ENCODE measurements at regions of chr2 and their contacts with region 1.

Region 1: GRCh38 chr2:230712443-230713330 is at the start of gene CAB39:
- DNase-seq: peak; percentile 88 to 92
- ATAC-seq: peak; percentile 90 to 94 (median 91)
- H3K4me3 ChIP-seq: peak within 1 kb of the TSS; percentile 88
- H3K27ac ChIP-seq: peak within 1 kb of the TSS; percentile 97
- H3K4me1 ChIP-seq: peaks cover 38% of the 10 kb centered on the region
- H3K27me3 ChIP-seq: no peaks in the 10 kb centered on the region
- CTCF ChIP-seq: peak; percentile 89
- total RNA-seq, gene CAB39: 107 to 139 (median 128) TPM

Region 2: DNA sequence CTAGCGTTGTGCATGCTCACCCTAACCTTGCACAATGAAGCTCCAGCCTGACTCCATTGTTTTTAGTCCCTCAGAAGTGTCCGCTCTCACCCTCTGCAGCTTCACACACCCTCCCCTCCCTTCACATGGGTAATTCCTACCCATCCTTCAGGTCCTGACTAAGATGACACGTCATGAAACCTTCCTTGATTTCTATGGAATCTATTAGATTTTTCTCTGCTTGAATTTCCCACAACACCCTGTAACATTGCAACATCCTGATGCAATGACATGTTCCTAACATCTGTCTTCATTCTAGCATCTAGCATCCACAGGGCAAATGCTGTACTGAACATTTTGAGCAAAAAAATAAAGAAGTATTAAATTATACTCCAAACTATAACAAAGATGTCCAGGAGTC is 1364.6 kb before region 1 on chr2:
- intact Hi-C with region 1: loop called in 1 of 2 experiments (anchors 5 kb)
- DNase-seq: no peak
- ATAC-seq: no peak
- H3K4me3 ChIP-seq: no peak overlapping the region
- H3K27ac ChIP-seq: no peak overlapping the region
- H3K4me1 ChIP-seq: no peaks in the 10 kb centered on the region
- H3K27me3 ChIP-seq: no peaks in the 10 kb centered on the region
- CTCF ChIP-seq: no peak

Region 3: DNA sequence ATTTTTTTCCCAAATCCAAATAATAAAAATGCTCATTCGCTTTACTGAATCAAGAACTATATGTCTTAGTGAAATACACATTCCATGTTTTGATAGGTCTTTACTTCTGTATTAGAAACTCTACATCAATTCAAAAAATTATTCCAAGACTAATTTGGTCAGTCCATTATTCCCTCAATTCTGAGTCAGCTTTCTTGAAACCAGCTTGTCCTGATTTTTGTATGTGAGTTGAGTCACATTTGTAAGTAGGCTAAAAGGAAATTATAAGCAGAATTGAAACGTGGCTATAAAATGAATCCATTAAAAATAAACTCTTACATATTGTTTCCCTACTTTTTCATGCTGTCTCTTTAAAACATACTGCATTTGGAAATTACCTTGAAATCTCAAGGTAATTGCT is 1111.3 kb before region 1 on chr2:
- intact Hi-C with region 1: no loop called
- DNase-seq: no peak
- ATAC-seq: no peak
- H3K4me3 ChIP-seq: no peak overlapping the region
- H3K27ac ChIP-seq: no peak overlapping the region
- H3K4me1 ChIP-seq: no peaks in the 10 kb centered on the region
- H3K27me3 ChIP-seq: no peaks in the 10 kb centered on the region
- CTCF ChIP-seq: no peak

Region 4: DNA sequence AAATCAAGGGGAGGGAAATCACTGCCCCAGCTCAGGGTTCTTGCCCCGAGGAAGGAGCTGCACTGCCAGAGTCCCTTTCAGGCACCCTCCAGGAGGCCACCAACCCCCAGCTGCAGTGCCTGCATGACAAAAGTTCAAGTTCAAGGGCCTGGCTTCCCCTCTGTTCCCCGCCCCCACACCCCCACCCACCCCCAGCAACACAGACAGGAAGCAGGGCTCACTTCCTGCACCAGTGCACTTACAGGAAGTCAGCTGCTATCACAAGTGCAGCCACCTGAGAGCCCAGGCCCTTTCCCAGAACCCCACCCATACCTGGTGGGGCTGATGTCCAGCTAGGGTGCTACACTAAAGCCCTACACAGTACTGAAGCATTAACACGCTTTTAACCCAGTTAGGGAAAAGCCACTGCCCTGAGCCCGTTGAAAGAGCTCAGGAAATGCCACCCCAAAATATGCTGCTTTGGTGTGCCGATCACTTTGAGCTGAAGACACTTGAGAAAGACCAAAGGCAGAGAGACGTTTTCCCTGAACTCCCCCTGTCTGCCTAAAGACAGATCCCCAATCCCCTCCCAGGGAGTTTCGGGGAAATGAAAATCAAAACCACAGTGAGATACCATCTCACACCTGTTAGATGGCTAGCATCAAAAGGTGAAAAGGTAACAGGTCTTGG is 110.0 kb before region 1 on chr2:
- intact Hi-C with region 1: no loop called
- DNase-seq: no peak
- ATAC-seq: no peak
- H3K4me3 ChIP-seq: no peak overlapping the region
- H3K27ac ChIP-seq: no peak overlapping the region
- H3K4me1 ChIP-seq: no peaks in the 10 kb centered on the region
- H3K27me3 ChIP-seq: no peaks in the 10 kb centered on the region
- CTCF ChIP-seq: no peak

Region 5: GRCh38 chr2:230668184-230668938 is 44.3 kb before region 1 on chr2:
- intact Hi-C with region 1: loop called in 1 of 2 experiments (anchors 2 kb)
- DNase-seq: peak; percentile 55 to 87
- ATAC-seq: peak; percentile 88 to 93 (median 92)
- H3K4me3 ChIP-seq: no peak overlapping the region
- H3K27ac ChIP-seq: peak overlapping the region; percentile 85
- H3K4me1 ChIP-seq: peaks cover 64% of the 10 kb centered on the region
- H3K27me3 ChIP-seq: no peaks in the 10 kb centered on the region
- CTCF ChIP-seq: no peak

Region 6: GRCh38 chr2:230677201-230677956 is 35.3 kb before region 1 on chr2:
- intact Hi-C with region 1: loop called in 1 of 2 experiments (anchors 5 kb)
- DNase-seq: no peak
- ATAC-seq: no peak
- H3K4me3 ChIP-seq: no peak overlapping the region
- H3K27ac ChIP-seq: no peak overlapping the region
- H3K4me1 ChIP-seq: peaks cover 6% of the 10 kb centered on the region
- H3K27me3 ChIP-seq: no peaks in the 10 kb centered on the region
- CTCF ChIP-seq: no peak

Region 7: DNA sequence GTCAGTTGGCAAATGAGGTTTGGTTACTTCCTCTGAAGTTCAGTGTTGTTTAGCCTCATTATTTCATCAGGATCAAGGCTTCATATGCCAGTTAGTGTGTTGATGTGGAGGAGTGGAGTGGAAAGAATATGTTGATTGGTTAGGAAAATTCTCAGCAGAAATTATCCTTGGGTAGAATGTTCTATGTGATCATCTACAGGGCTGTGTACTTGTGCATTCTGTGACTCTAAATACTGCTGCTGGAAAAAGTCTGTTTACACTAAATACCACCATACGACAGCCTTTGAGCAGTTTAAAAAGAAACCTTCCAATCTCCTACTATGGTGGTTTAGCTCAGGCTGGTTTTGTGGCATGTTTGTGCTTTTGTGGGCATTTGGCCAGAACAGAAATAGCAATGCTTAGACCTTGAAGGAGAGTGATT is 25.7 kb after region 1 on chr2:
- intact Hi-C with region 1: no loop called
- DNase-seq: no peak
- ATAC-seq: peak in 1 of 4 donors; percentile 8
- H3K4me3 ChIP-seq: no peak overlapping the region
- H3K27ac ChIP-seq: peak overlapping the region; percentile 14
- H3K4me1 ChIP-seq: peaks cover 72% of the 10 kb centered on the region
- H3K27me3 ChIP-seq: no peaks in the 10 kb centered on the region
- CTCF ChIP-seq: no peak

Region 8: GRCh38 chr2:230798769-230799399 is 86.2 kb after region 1 on chr2:
- intact Hi-C with region 1: loop called (anchors 5 kb)
- DNase-seq: no peak
- ATAC-seq: peak in 3 of 4 donors; percentile 45 to 70 (median 53)
- H3K4me3 ChIP-seq: no peak overlapping the region
- H3K27ac ChIP-seq: peak overlapping the region; percentile 80
- H3K4me1 ChIP-seq: peaks cover 52% of the 10 kb centered on the region
- H3K27me3 ChIP-seq: no peaks in the 10 kb centered on the region
- CTCF ChIP-seq: peak; percentile 71

Region 9: DNA sequence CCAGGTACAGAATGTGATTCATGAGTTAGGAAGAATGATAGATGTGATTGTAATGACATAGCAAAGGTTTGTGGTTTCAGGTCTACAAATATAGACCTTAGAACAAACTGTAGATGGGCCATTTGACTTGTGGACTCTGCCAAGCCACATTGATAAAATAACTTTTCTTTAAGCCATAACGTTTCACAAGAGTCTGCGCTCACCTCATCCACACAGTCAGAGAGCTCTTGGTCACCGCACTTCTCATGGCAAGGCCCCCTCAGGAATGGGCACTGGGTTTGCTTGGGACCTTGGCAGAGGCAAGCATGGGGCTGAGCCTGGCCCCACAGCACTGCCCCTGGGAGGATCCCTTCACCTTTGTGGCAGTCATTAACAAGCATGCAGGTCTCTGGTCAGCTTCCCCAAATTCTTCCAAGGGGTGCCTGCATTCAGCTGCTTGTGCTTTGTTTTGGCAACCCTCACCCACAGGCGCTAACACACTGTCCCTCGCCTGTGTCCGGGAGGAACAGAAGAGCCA is 499.7 kb after region 1 on chr2:
- intact Hi-C with region 1: no loop called
- DNase-seq: peak in 1 of 2 donors; percentile 31
- ATAC-seq: peak; percentile 90 to 95 (median 90)
- H3K4me3 ChIP-seq: no peak overlapping the region
- H3K27ac ChIP-seq: peak overlapping the region; percentile 79
- H3K4me1 ChIP-seq: peaks cover 20% of the 10 kb centered on the region
- H3K27me3 ChIP-seq: no peaks in the 10 kb centered on the region
- CTCF ChIP-seq: no peak

Measured in psoas muscle (tissue), 8 donors.